ENCODE measurements at regions of chr1 and their contacts with region 1.

Region 1: GRCh38 chr1:183471743-183472487 is 384 bp upstream of the SMG7 start:
- DNase-seq: peak; percentile 92 to 98 (median 96)
- ATAC-seq: peak; percentile 65
- H3K4me3 ChIP-seq: peak overlapping the region; percentile 83 to 86
- H3K4me3 Mint-ChIP-seq: peak overlapping the region; percentile 98
- H3K27ac ChIP-seq: peak overlapping the region; percentile 90 to 97
- H3K27ac Mint-ChIP-seq: peak overlapping the region; percentile 99
- H3K4me1 ChIP-seq: peaks cover 32% of the 10 kb centered on the region
- H3K4me1 Mint-ChIP-seq: peaks cover 24% of the 10 kb centered on the region
- H3K27me3 ChIP-seq: no peaks in the 10 kb centered on the region
- H3K27me3 Mint-ChIP-seq: no peaks in the 10 kb centered on the region
- CTCF ChIP-seq: no peak

Region 2: DNA sequence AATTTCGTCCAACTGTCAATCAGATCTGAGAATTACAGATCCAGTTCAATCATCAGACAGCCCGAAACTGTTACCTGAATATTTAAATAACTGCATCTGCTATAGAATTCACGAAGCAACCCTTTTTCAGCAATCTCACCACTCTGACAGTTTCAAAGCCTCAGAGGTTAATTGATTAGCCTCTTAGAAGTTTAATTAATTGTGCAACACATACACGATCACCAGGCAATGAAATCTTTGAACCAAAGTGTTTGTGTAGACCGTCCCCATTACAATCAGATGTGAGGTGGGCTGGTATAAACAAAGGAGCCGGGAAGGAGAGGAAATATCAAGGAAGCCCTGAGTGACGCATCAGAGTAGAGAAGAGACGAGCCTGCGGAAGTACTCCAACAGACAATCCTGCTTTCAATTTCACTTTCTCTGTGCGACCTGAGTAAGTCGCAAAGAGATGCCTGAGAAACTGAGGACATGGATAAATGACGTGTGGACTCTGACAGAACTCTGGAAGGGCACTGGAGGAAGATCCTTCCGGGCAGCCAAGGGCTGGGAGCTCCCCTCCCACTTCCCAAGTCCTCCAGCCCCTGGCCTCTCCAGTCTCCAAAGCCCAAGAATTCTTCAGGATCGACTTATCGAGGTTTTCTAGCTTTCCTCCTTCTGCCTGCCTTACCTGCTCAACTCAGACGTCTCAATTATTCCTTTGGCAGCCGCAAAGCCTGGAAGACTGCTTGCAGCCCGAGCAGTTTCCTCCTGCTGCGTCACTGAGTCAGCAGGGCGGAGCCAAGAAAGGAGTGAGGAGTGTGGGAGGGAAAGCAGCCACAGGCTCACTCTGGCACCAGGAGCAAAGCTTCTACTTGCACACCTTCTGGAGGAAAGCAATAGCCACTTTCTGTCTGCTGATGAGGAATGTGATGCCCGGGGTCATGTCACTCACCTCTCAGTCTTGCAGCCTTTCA is 883.1 kb before region 1 on chr1 and contains the start of gene RNASEL:
- CTCF ChIA-PET with region 1: no interaction called
- POLR2A ChIA-PET with region 1: no interaction called
- intact Hi-C with region 1: loop called (anchors 5 to 10 kb)
- DNase-seq: peak; percentile 24 to 87 (median 51)
- ATAC-seq: peak; percentile 92
- H3K4me3 ChIP-seq: peak within 1 kb of the TSS; percentile 78 to 95
- H3K4me3 Mint-ChIP-seq: peak within 1 kb of the TSS; percentile 94
- H3K27ac ChIP-seq: peak within 1 kb of the TSS; percentile 96 to 99
- H3K27ac Mint-ChIP-seq: peak within 1 kb of the TSS; percentile 99
- H3K4me1 ChIP-seq: peaks cover 44% of the 10 kb centered on the region
- H3K4me1 Mint-ChIP-seq: peaks cover 52% of the 10 kb centered on the region
- H3K27me3 ChIP-seq: no peaks in the 10 kb centered on the region
- H3K27me3 Mint-ChIP-seq: peaks cover 3% of the 10 kb centered on the region
- CTCF ChIP-seq: no peak
- total RNA-seq, gene RNASEL: 1.5 to 1.7 TPM

Region 3: DNA sequence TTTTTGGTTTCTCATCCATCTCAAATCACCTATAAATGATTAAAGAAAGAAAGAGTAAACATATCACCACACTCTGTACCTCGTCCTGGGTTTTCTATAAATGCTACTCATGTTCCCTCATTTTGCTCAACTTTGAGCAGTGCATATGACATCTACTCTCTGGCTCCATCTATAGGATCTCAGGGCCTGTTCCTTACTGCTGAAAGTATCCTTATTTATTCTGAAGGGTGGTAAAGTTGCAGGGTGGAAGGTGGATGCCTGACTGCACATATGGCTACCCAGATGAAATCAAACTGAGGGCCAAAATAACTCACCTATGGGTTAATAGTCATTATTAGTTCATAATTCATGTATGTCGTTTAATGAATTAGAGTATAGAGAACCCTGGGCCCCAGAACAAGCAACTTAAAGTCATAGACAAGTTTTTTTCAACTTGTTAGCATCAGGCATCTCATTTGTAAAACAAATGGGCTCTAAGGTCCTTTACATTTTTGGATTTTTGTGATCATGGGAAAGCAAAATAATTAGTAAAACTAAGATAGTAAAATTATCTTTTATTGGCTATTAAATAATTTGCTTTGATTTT is 71.8 kb after region 1 on chr1:
- CTCF ChIA-PET with region 1: interaction called, 3 read pairs
- POLR2A ChIA-PET with region 1: interaction called, 4 read pairs
- intact Hi-C with region 1: loop called (anchors 1 kb)
- DNase-seq: peak in 3 of 9 experiments; percentile 9 to 70 (median 55)
- ATAC-seq: peak; percentile 98
- H3K4me3 ChIP-seq: no peak overlapping the region
- H3K4me3 Mint-ChIP-seq: no peak overlapping the region
- H3K27ac ChIP-seq: no peak overlapping the region
- H3K27ac Mint-ChIP-seq: peak overlapping the region; percentile 41
- H3K4me1 ChIP-seq: no peaks in the 10 kb centered on the region
- H3K4me1 Mint-ChIP-seq: peaks cover 8% of the 10 kb centered on the region
- H3K27me3 ChIP-seq: no peaks in the 10 kb centered on the region
- H3K27me3 Mint-ChIP-seq: no peaks in the 10 kb centered on the region
- CTCF ChIP-seq: peak; percentile 59

Region 4: GRCh38 chr1:183572721-183573120 is 100.8 kb after region 1 on chr1:
- CTCF ChIA-PET with region 1: no interaction called
- POLR2A ChIA-PET with region 1: no interaction called
- intact Hi-C with region 1: no loop called
- DNase-seq: no peak
- ATAC-seq: no peak
- H3K4me3 ChIP-seq: no peak overlapping the region
- H3K4me3 Mint-ChIP-seq: no peak overlapping the region
- H3K27ac ChIP-seq: no peak overlapping the region
- H3K27ac Mint-ChIP-seq: no peak overlapping the region
- H3K4me1 ChIP-seq: peaks cover 2% of the 10 kb centered on the region
- H3K4me1 Mint-ChIP-seq: peaks cover 14% of the 10 kb centered on the region
- H3K27me3 ChIP-seq: no peaks in the 10 kb centered on the region
- H3K27me3 Mint-ChIP-seq: peaks cover 2% of the 10 kb centered on the region
- CTCF ChIP-seq: no peak

Region 5: GRCh38 chr1:183685112-183685713 is 213.3 kb after region 1 on chr1:
- CTCF ChIA-PET with region 1: interaction called, 7 read pairs
- POLR2A ChIA-PET with region 1: no interaction called
- intact Hi-C with region 1: loop called in 1 of 2 experiments (anchors 1 kb)
- DNase-seq: peak in 3 of 9 experiments; percentile 18 to 69 (median 58)
- ATAC-seq: peak; percentile 83
- H3K4me3 ChIP-seq: no peak overlapping the region
- H3K4me3 Mint-ChIP-seq: no peak overlapping the region
- H3K27ac ChIP-seq: no peak overlapping the region
- H3K27ac Mint-ChIP-seq: no peak overlapping the region
- H3K4me1 ChIP-seq: no peaks in the 10 kb centered on the region
- H3K4me1 Mint-ChIP-seq: peaks cover 4% of the 10 kb centered on the region
- H3K27me3 ChIP-seq: no peaks in the 10 kb centered on the region
- H3K27me3 Mint-ChIP-seq: peaks cover 5% of the 10 kb centered on the region
- CTCF ChIP-seq: peak; percentile 83

Region 6: GRCh38 chr1:184754476-184755225 is 1282.7 kb after region 1 on chr1 and contains the start of gene EDEM3:
- CTCF ChIA-PET with region 1: no interaction called
- POLR2A ChIA-PET with region 1: no interaction called
- intact Hi-C with region 1: loop called in 1 of 2 experiments (anchors 2 kb)
- DNase-seq: peak; percentile 94 to 100 (median 97)
- ATAC-seq: peak; percentile 92
- H3K4me3 ChIP-seq: peak within 1 kb of the TSS; percentile 80 to 91
- H3K4me3 Mint-ChIP-seq: peak within 1 kb of the TSS; percentile 93
- H3K27ac ChIP-seq: peak within 1 kb of the TSS; percentile 80 to 84
- H3K27ac Mint-ChIP-seq: peak within 1 kb of the TSS; percentile 97
- H3K4me1 ChIP-seq: peaks cover 22% of the 10 kb centered on the region
- H3K4me1 Mint-ChIP-seq: peaks cover 50% of the 10 kb centered on the region
- H3K27me3 ChIP-seq: no peaks in the 10 kb centered on the region
- H3K27me3 Mint-ChIP-seq: no peaks in the 10 kb centered on the region
- CTCF ChIP-seq: no peak
- total RNA-seq, gene EDEM3: 9.3 to 14.8 TPM

Region 7: DNA sequence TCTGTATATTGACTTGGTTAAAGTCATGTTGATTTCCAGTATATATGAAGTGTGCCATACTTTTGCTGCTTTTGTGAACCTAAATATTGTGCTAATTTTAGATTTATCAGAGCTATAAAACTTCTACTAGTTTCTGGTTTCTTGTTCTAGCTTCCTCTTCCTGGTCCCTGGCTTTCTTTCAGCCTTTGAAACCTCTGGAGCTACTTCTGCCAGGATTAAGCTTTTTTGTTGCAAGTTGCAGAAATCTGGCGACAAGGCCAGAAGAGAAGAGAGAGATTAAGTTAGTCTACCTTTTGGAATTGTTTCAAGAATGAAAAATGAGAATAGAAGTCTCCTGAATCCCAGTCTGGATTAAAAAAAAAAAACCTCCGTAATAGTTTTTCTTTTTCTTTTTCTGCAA is 1587.0 kb after region 1 on chr1:
- CTCF ChIA-PET with region 1: no interaction called
- POLR2A ChIA-PET with region 1: no interaction called
- intact Hi-C with region 1: no loop called
- DNase-seq: no peak
- ATAC-seq: no peak
- H3K4me3 ChIP-seq: no peak overlapping the region
- H3K4me3 Mint-ChIP-seq: no peak overlapping the region
- H3K27ac ChIP-seq: no peak overlapping the region
- H3K27ac Mint-ChIP-seq: no peak overlapping the region
- H3K4me1 ChIP-seq: peaks cover 5% of the 10 kb centered on the region
- H3K4me1 Mint-ChIP-seq: peaks cover 67% of the 10 kb centered on the region
- H3K27me3 ChIP-seq: no peaks in the 10 kb centered on the region
- H3K27me3 Mint-ChIP-seq: no peaks in the 10 kb centered on the region
- CTCF ChIP-seq: no peak

Region 8: GRCh38 chr1:185156854-185157598 is 1685.1 kb after region 1 on chr1 and contains the starts of genes SWT1 and TRMT1L:
- CTCF ChIA-PET with region 1: no interaction called
- POLR2A ChIA-PET with region 1: no interaction called
- intact Hi-C with region 1: loop called (anchors 2 to 10 kb)
- DNase-seq: peak; percentile 96 to 99 (median 98)
- ATAC-seq: peak; percentile 89
- H3K4me3 ChIP-seq: peak within 1 kb of the TSS; percentile 75 to 97
- H3K4me3 Mint-ChIP-seq: peak within 1 kb of the TSS; percentile 99
- H3K27ac ChIP-seq: peak within 1 kb of the TSS; percentile 86 to 98
- H3K27ac Mint-ChIP-seq: peak within 1 kb of the TSS; percentile 99
- H3K4me1 ChIP-seq: peaks cover 17% of the 10 kb centered on the region
- H3K4me1 Mint-ChIP-seq: peaks cover 49% of the 10 kb centered on the region
- H3K27me3 ChIP-seq: no peaks in the 10 kb centered on the region
- H3K27me3 Mint-ChIP-seq: no peaks in the 10 kb centered on the region
- CTCF ChIP-seq: no peak
- total RNA-seq, gene SWT1: 3.0 to 3.9 TPM
- total RNA-seq, gene TRMT1L: 3.0 to 5.1 TPM

Measured in CD8-positive, alpha-beta T cell (primary cell).